CD4-positive, alpha-beta T cell (primary cell): ENCODE measurements at regions of chr2 and their contacts with region 1.

Region 1: DNA sequence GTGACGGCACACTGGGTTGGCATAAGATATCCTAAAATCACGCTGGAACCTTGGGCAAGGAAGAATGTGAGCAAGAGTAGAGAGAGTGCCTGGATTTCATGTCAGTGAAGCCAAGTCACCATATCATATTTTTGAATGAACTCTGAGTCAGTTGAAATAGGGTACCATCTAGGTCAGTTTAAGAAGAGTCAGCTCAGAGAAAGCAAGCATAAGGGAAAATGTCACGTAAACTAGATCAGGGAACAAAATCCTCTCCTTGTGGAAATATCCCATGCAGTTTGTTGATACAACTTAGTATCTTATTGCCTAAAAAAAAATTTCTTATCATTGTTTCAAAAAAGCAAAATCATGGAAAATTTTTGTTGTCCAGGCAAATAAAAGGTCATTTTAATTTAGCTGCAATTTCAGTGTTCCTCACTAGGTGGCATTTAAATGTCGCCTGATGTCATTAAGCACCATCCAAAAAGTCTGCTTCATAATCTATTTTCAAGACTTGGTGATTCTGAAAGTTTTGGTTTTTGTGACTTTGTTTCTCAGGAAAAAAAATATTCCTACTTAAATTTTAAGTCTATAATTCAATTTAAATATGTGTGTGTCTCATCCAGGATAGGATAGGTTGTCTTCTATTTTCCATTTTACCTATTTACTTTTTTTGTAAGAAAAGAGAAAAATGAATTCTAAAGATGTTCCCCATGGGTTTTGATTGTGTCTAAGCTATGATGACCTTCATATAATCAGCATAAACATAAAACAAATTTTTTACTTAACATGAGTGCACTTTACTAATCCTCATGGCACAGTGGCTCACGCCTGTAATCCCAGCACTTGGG is 19.6 kb downstream of the RSAD2 start:
- DNase-seq: peak in 3 of 14 experiments; percentile 63 to 72 (median 68)
- ATAC-seq: peak; percentile 49
- H3K4me3 ChIP-seq: no peak overlapping the region
- H3K4me3 Mint-ChIP-seq: no peak overlapping the region
- H3K27ac ChIP-seq: no peak overlapping the region
- H3K27ac Mint-ChIP-seq: peak overlapping the region; percentile 50
- H3K4me1 ChIP-seq: peaks cover 4% of the 10 kb centered on the region
- H3K4me1 Mint-ChIP-seq: peaks cover 19% of the 10 kb centered on the region
- H3K27me3 ChIP-seq: no peaks in the 10 kb centered on the region
- H3K27me3 Mint-ChIP-seq: no peaks in the 10 kb centered on the region
- CTCF ChIP-seq: peak; percentile 90

Region 2: DNA sequence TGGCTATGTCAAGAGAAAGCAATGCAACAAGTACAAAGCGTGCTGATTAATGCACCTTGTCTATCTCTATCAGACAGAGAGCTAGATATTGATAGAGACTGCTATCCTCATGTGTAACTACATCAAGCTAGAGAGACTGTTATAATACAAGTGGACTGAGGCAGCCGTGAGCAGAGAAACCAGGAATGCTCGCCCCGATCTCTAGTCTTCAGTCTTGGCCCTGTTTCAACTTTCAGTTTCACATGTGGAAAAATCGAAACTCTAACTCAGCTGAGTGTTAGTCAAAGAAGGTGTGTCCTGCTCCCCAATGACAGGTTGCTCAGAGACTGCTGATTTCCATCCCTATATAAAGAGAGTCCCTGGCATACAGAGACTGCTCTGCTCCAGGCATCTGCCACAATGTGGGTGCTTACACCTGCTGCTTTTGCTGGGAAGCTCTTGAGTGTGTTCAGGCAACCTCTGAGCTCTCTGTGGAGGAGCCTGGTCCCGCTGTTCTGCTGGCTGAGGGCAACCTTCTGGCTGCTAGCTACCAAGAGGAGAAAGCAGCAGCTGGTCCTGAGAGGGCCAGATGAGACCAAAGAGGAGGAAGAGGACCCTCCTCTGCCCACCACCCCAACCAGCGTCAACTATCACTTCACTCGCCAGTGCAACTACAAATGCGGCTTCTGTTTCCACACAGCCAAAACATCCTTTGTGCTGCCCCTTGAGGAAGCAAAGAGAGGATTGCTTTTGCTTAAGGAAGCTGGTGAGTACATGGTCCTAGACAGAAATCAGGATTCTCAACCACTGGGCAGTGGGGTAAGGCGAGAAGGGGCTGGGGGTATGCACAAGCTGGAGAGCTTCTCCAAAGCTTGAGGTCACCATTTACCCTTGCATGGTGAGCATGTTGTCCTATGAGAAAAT is 19.5 kb before region 1 on chr2 and contains the start of gene RSAD2:
- CTCF ChIA-PET with region 1: interaction called, 7 read pairs
- POLR2A ChIA-PET with region 1: interaction called, 12 read pairs
- intact Hi-C with region 1: no loop called
- DNase-seq: peak in 9 of 14 experiments; percentile 8 to 81 (median 62)
- ATAC-seq: peak; percentile 82
- H3K4me3 ChIP-seq: peak within 1 kb of the TSS; percentile 56
- H3K4me3 Mint-ChIP-seq: peak within 1 kb of the TSS; percentile 90
- H3K27ac ChIP-seq: peak within 1 kb of the TSS; percentile 18 to 31
- H3K27ac Mint-ChIP-seq: peak within 1 kb of the TSS; percentile 92
- H3K4me1 ChIP-seq: peaks cover 25% of the 10 kb centered on the region
- H3K4me1 Mint-ChIP-seq: peaks cover 78% of the 10 kb centered on the region
- H3K27me3 ChIP-seq: no peaks in the 10 kb centered on the region
- H3K27me3 Mint-ChIP-seq: no peaks in the 10 kb centered on the region
- CTCF ChIP-seq: no peak
- total RNA-seq, gene RSAD2: 3.9 to 4.6 TPM

Region 3: GRCh38 chr2:6917071-6917760 is 20.1 kb after region 1 on chr2 and contains the start of gene RNF144A:
- CTCF ChIA-PET with region 1: interaction called, 41 read pairs
- POLR2A ChIA-PET with region 1: interaction called, 13 read pairs
- intact Hi-C with region 1: loop called (anchors 1 to 2 kb)
- DNase-seq: peak; percentile 56 to 91 (median 69)
- ATAC-seq: peak; percentile 69
- H3K4me3 ChIP-seq: peak within 1 kb of the TSS; percentile 68
- H3K4me3 Mint-ChIP-seq: peak within 1 kb of the TSS; percentile 85
- H3K27ac ChIP-seq: peak within 1 kb of the TSS in 1 of 2 donors; percentile 29
- H3K27ac Mint-ChIP-seq: peak within 1 kb of the TSS; percentile 85
- H3K4me1 ChIP-seq: peaks cover 74% of the 10 kb centered on the region
- H3K4me1 Mint-ChIP-seq: peaks cover 82% of the 10 kb centered on the region
- H3K27me3 ChIP-seq: no peaks in the 10 kb centered on the region
- H3K27me3 Mint-ChIP-seq: no peaks in the 10 kb centered on the region
- CTCF ChIP-seq: peak; percentile 60
- total RNA-seq, gene RNF144A: 39.0 to 40.1 TPM

Region 4: DNA sequence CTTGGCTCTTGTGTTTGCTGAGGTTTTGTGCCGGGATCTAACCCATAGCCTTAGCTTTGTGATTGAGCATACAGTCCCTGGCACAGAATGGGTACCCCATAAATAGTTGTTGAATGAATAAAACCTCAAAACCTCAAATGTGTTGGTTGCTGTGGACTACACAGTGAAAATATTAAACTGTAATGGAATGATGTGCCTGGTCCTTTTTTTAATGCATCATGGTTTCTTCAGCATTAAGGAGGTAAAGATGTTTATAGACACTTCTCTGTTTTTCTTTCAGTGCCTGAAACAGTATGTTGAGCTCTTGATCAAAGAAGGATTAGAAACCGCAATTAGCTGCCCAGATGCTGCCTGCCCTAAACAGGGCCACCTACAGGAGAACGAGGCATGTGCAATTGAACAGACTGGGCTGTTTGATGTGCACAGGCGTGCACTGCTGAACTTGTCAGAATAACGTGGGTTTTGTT is 117.1 kb after region 1 on chr2:
- CTCF ChIA-PET with region 1: interaction called, 18 read pairs
- POLR2A ChIA-PET with region 1: interaction called, 4 read pairs
- intact Hi-C with region 1: loop called (anchors 1 to 5 kb)
- DNase-seq: peak in 10 of 14 experiments; percentile 11 to 67 (median 30)
- ATAC-seq: peak; percentile 96
- H3K4me3 ChIP-seq: no peak overlapping the region
- H3K4me3 Mint-ChIP-seq: no peak overlapping the region
- H3K27ac ChIP-seq: no peak overlapping the region
- H3K27ac Mint-ChIP-seq: peak overlapping the region; percentile 6
- H3K4me1 ChIP-seq: peaks cover 5% of the 10 kb centered on the region
- H3K4me1 Mint-ChIP-seq: peaks cover 44% of the 10 kb centered on the region
- H3K27me3 ChIP-seq: no peaks in the 10 kb centered on the region
- H3K27me3 Mint-ChIP-seq: no peaks in the 10 kb centered on the region
- CTCF ChIP-seq: peak; percentile 56

Region 5: DNA sequence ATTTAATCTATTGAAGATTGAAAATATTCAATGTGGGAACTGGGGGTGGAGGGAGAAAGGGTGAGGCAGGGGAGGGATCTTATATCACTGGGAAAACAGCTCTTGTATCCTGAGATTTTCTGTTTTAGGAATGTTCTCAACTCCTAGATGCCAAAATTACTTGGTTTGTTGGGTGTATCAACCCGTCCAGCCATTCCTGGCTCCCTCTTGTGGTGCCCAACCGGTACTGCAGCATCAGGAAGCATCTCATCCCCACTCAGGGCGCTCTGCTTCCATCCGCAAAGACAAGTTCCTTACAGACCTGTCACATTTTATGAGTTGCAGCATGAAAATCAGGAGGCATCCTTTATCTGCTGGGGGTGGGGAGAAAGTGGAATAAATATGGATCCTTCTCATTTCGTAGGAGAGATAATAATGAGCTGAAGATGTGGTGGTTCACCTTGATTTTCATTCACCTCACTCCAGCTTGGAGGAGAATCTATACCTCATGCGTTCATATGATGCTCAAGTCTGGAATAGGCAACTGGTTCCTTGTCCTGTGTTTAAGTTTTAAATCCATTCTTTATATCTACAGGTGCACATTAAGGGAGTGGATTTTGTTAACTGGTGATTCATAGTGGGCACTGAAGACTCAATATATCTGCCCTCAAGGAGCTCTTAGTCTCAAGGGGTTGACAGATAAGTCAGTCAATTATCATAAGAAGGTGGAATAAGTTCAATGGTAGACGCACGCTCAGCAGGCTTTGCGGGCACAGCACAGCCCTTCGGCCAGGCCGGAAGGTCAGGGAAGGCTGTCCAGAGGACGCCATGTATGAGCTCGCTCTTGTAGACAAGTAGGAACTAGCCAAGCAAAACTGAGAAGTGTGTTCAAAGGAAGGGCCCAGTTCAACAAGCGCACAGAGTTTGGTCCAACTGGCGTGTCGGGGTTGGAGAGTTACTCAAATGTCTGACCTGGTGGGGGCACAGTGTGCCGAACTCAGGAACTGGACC is 147.4 kb after region 1 on chr2:
- CTCF ChIA-PET with region 1: interaction called, 9 read pairs
- POLR2A ChIA-PET with region 1: interaction called, 3 read pairs
- intact Hi-C with region 1: loop called (anchors 1 kb)
- DNase-seq: peak; percentile 36 to 81 (median 59)
- ATAC-seq: peak; percentile 86
- H3K4me3 ChIP-seq: no peak overlapping the region
- H3K4me3 Mint-ChIP-seq: no peak overlapping the region
- H3K27ac ChIP-seq: no peak overlapping the region
- H3K27ac Mint-ChIP-seq: peak overlapping the region; percentile 38
- H3K4me1 ChIP-seq: peaks cover 11% of the 10 kb centered on the region
- H3K4me1 Mint-ChIP-seq: peaks cover 37% of the 10 kb centered on the region
- H3K27me3 ChIP-seq: no peaks in the 10 kb centered on the region
- H3K27me3 Mint-ChIP-seq: no peaks in the 10 kb centered on the region
- CTCF ChIP-seq: peak; percentile 97

Region 6: GRCh38 chr2:7097348-7097895 is 200.3 kb after region 1 on chr2:
- CTCF ChIA-PET with region 1: no interaction called
- POLR2A ChIA-PET with region 1: no interaction called
- intact Hi-C with region 1: no loop called
- DNase-seq: peak; percentile 44 to 86 (median 66)
- ATAC-seq: peak; percentile 97
- H3K4me3 ChIP-seq: peak overlapping the region; percentile 6
- H3K4me3 Mint-ChIP-seq: peak overlapping the region; percentile 42
- H3K27ac ChIP-seq: no peak overlapping the region
- H3K27ac Mint-ChIP-seq: no peak overlapping the region
- H3K4me1 ChIP-seq: peaks cover 9% of the 10 kb centered on the region
- H3K4me1 Mint-ChIP-seq: peaks cover 7% of the 10 kb centered on the region
- H3K27me3 ChIP-seq: no peaks in the 10 kb centered on the region
- H3K27me3 Mint-ChIP-seq: no peaks in the 10 kb centered on the region
- CTCF ChIP-seq: peak; percentile 99